ENCODE measurements at regions of chr19 and their contacts with region 1.

Region 1: DNA sequence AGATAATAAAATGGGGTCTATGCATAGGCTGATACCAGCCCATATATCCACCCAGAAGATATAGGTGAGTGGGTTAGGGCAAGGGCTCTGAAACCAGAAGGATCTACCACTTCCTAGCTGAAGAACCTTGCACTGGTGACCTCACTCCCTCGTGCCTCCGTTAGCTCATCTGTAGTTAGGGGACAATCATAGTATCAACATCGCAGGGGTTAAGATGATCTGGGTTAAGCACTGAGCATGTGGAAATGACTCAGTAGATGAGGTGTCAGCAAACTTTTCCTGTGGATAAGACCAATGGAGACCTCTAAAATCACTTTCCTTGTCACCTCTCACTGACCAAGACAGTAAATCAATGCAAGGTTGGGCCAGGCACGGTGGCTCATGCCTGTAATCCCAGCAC is 30.5 kb downstream of the TNFSF14 start:
- DNase-seq: no peak
- ATAC-seq: no peak
- H3K4me3 ChIP-seq: no peak overlapping the region
- H3K4me3 Mint-ChIP-seq: peak overlapping the region in 1 of 10 donors; percentile 5
- H3K27ac ChIP-seq: no peak overlapping the region
- H3K27ac Mint-ChIP-seq: peak overlapping the region in 1 of 9 donors; percentile 74
- H3K4me1 ChIP-seq: peaks cover 17 to 22% of the 10 kb centered on the region in 2 donors
- H3K4me1 Mint-ChIP-seq: peaks cover 6 to 45% (median 22%) of the 10 kb centered on the region in 7 donors
- H3K27me3 ChIP-seq: no peaks in the 10 kb centered on the region
- H3K27me3 Mint-ChIP-seq: no peaks in the 10 kb centered on the region

Region 2: GRCh38 chr19:6590827-6591319 is 48.6 kb before region 1 on chr19 and contains the start of gene CD70:
- CTCF ChIA-PET with region 1: no interaction called
- POLR2A ChIA-PET with region 1: no interaction called
- intact Hi-C with region 1: no loop called
- DNase-seq: peak in 6 of 9 donors; percentile 10 to 68 (median 17)
- ATAC-seq: peak; percentile 74
- H3K4me3 ChIP-seq: peak within 1 kb of the TSS; percentile 56
- H3K4me3 Mint-ChIP-seq: peak within 1 kb of the TSS; percentile 58 to 93 (median 82)
- H3K27ac ChIP-seq: no peak within 1 kb of the TSS
- H3K27ac Mint-ChIP-seq: peak within 1 kb of the TSS in 2 of 9 donors; percentile 1 to 87
- H3K4me1 ChIP-seq: peaks cover 30 to 46% of the 10 kb centered on the region in 2 donors
- H3K4me1 Mint-ChIP-seq: peaks cover 40 to 61% (median 47%) of the 10 kb centered on the region in 7 donors
- H3K27me3 ChIP-seq: peaks cover 0 to 20% of the 10 kb centered on the region in 2 donors
- H3K27me3 Mint-ChIP-seq: peaks cover 46 to 71% (median 66%) of the 10 kb centered on the region in 5 donors
- total RNA-seq, gene CD70: 1.2 to 39.6 TPM in 2 of 5 experiments, not detected in the others

Region 3: GRCh38 chr19:6654347-6655310 is 15.2 kb after region 1 on chr19:
- CTCF ChIA-PET with region 1: interaction called, 5 read pairs
- POLR2A ChIA-PET with region 1: no interaction called
- intact Hi-C with region 1: loop called in 1 of 2 experiments (anchors 1 kb)
- DNase-seq: peak in 3 of 9 donors; percentile 14 to 75 (median 33)
- ATAC-seq: peak; percentile 76
- H3K4me3 ChIP-seq: peak overlapping the region; percentile 51
- H3K4me3 Mint-ChIP-seq: peak overlapping the region; percentile 59 to 96 (median 78)
- H3K27ac ChIP-seq: peak overlapping the region; percentile 62
- H3K27ac Mint-ChIP-seq: peak overlapping the region; percentile 62 to 99 (median 82)
- H3K4me1 ChIP-seq: peaks cover 17 to 21% of the 10 kb centered on the region in 2 donors
- H3K4me1 Mint-ChIP-seq: peaks cover 20 to 63% (median 25%) of the 10 kb centered on the region in 7 donors
- H3K27me3 ChIP-seq: no peaks in the 10 kb centered on the region
- H3K27me3 Mint-ChIP-seq: peaks cover 0 to 6% (median 0%) of the 10 kb centered on the region in 5 donors